G401 (cell line): ENCODE measurements at regions of chr6 and their contacts with region 1.

Region 1: DNA sequence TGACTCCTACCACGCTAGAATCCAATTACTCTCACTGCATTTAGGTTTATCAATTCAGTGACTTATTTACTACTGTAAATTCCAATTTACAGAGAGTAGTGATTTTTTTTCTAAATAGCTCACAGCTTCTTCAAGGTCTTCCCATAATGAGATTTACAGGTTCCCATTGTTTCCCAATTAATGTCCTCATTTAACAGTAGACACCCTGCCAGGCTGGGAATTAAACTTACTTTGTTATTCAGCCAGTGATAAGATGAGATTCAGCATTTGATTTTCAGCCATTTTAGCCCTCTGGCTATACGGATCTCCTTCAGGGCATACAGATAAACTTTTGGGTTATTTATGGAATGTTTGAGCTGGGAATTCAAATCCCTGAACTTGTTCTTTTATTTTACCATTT is 582.9 kb upstream of the EYS start:
- DNase-seq: no peak

Region 2: DNA sequence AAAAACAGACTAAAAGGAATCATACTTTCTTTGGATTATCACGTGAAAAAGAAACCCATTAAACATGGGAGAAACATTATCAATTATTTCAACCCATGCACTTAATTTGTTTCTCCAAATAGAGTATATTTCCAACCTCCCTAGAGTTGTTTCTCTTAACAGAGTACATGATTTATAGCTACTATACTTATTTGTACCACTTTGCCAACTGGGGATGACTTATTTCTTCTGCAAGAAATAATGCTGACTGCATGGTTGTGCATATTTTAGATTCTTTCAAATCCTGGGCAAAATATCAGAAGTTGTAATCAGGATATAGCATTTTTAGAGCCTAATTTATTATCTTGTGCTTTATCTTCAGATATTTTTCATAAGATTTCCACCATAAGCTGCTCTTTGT is 46.3 kb after region 1 on chr6:
- in situ Hi-C with region 1: loop called (anchors 5 kb)
- DNase-seq: no peak